CD8-positive, alpha-beta T cell (primary cell): ENCODE measurements at regions of chr6 and their contacts with region 1.

Region 1: DNA sequence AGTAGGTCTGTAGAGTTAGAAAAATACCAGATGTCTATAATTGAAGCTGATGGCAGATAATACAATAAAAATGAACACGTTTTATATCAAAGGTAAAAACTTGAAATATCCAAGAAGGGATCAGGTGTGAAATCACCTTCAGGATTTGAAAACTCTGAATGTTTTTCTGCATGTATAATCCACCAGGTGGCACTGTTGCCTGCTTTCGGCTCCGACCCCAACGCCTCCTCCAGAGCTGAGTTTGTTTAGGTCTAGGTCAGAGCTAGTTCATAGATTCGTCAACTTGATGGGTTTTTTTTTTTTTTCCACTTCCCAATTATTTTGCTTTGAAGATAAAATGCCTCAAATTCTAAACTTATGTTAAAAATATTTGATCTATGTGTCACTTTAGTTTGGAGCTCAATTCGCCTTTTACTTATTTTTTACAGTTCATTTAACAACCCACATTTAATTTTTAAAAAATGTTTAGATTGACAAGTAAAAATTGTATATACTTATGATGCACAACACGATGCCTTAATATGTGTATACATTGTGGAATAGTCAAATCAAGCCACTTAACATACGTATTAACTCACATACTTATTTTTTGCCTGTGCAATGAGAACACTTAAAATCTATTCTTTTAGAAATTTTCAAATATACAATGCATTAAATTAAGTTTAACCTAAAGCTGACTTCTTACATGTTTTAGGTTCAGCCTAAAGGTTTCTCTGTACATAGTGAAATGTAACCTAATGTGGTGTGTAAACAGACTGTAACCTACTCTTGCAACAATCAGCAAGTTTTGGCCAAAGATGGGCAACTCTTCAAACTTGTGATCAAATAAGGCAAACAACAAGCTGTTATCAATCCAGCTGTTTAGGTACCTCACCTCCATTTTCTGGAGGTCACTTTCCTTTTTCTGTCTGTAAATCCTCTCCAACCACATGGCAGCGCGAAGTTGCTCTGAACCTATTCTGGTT is 39.4 kb upstream of the ENPP4 start:
- DNase-seq: peak; percentile 6 to 73 (median 62)
- ATAC-seq: no peak
- H3K4me3 ChIP-seq: no peak overlapping the region
- H3K4me3 Mint-ChIP-seq: no peak overlapping the region
- H3K27ac ChIP-seq: no peak overlapping the region
- H3K27ac Mint-ChIP-seq: no peak overlapping the region
- H3K4me1 ChIP-seq: no peaks in the 10 kb centered on the region
- H3K4me1 Mint-ChIP-seq: no peaks in the 10 kb centered on the region
- H3K27me3 ChIP-seq: no peaks in the 10 kb centered on the region
- H3K27me3 Mint-ChIP-seq: peaks cover 36% of the 10 kb centered on the region
- CTCF ChIP-seq: peak; percentile 95

Region 2: GRCh38 chr6:46104209-46104608 is 13.8 kb after region 1 on chr6:
- CTCF ChIA-PET with region 1: interaction called, 12 read pairs
- POLR2A ChIA-PET with region 1: no interaction called
- intact Hi-C with region 1: no loop called
- DNase-seq: peak in 2 of 9 experiments; percentile 8 to 12
- ATAC-seq: no peak
- H3K4me3 ChIP-seq: no peak overlapping the region
- H3K4me3 Mint-ChIP-seq: no peak overlapping the region
- H3K27ac ChIP-seq: peak overlapping the region in 1 of 2 experiments; percentile 17
- H3K27ac Mint-ChIP-seq: no peak overlapping the region
- H3K4me1 ChIP-seq: peaks cover 7% of the 10 kb centered on the region
- H3K4me1 Mint-ChIP-seq: peaks cover 11% of the 10 kb centered on the region
- H3K27me3 ChIP-seq: no peaks in the 10 kb centered on the region
- H3K27me3 Mint-ChIP-seq: no peaks in the 10 kb centered on the region
- CTCF ChIP-seq: no peak

Region 3: DNA sequence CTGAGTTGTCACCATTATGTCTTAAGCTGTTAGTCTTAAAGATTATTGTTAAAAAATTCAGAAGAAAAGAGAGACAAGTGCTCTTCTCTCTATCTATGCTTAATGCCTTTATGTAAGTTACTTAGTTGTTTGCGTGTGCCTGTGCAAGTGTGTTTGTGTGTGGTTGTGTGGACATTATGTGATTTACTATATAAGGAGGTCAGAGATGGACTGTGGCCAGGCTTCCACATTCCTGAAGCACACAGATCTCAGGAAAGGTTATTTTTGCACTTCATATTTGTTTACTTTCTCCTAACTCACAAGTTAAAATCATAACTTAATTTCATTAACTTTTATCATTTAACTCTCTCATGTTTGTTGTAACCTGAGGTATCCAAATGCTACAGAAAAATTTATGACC is 53.9 kb after region 1 on chr6:
- CTCF ChIA-PET with region 1: no interaction called
- POLR2A ChIA-PET with region 1: no interaction called
- intact Hi-C with region 1: no loop called
- DNase-seq: no peak
- ATAC-seq: no peak
- H3K4me3 ChIP-seq: no peak overlapping the region
- H3K4me3 Mint-ChIP-seq: no peak overlapping the region
- H3K27ac ChIP-seq: no peak overlapping the region
- H3K27ac Mint-ChIP-seq: no peak overlapping the region
- H3K4me1 ChIP-seq: no peaks in the 10 kb centered on the region
- H3K4me1 Mint-ChIP-seq: peaks cover 6% of the 10 kb centered on the region
- H3K27me3 ChIP-seq: no peaks in the 10 kb centered on the region
- H3K27me3 Mint-ChIP-seq: no peaks in the 10 kb centered on the region
- CTCF ChIP-seq: no peak

Region 4: GRCh38 chr6:46400898-46401297 is 310.5 kb after region 1 on chr6:
- CTCF ChIA-PET with region 1: interaction called, 13 read pairs
- POLR2A ChIA-PET with region 1: no interaction called
- intact Hi-C with region 1: no loop called
- DNase-seq: no peak
- ATAC-seq: no peak
- H3K4me3 ChIP-seq: no peak overlapping the region
- H3K4me3 Mint-ChIP-seq: no peak overlapping the region
- H3K27ac ChIP-seq: no peak overlapping the region
- H3K27ac Mint-ChIP-seq: no peak overlapping the region
- H3K4me1 ChIP-seq: no peaks in the 10 kb centered on the region
- H3K4me1 Mint-ChIP-seq: no peaks in the 10 kb centered on the region
- H3K27me3 ChIP-seq: no peaks in the 10 kb centered on the region
- H3K27me3 Mint-ChIP-seq: peaks cover 11% of the 10 kb centered on the region
- CTCF ChIP-seq: no peak

Region 5: DNA sequence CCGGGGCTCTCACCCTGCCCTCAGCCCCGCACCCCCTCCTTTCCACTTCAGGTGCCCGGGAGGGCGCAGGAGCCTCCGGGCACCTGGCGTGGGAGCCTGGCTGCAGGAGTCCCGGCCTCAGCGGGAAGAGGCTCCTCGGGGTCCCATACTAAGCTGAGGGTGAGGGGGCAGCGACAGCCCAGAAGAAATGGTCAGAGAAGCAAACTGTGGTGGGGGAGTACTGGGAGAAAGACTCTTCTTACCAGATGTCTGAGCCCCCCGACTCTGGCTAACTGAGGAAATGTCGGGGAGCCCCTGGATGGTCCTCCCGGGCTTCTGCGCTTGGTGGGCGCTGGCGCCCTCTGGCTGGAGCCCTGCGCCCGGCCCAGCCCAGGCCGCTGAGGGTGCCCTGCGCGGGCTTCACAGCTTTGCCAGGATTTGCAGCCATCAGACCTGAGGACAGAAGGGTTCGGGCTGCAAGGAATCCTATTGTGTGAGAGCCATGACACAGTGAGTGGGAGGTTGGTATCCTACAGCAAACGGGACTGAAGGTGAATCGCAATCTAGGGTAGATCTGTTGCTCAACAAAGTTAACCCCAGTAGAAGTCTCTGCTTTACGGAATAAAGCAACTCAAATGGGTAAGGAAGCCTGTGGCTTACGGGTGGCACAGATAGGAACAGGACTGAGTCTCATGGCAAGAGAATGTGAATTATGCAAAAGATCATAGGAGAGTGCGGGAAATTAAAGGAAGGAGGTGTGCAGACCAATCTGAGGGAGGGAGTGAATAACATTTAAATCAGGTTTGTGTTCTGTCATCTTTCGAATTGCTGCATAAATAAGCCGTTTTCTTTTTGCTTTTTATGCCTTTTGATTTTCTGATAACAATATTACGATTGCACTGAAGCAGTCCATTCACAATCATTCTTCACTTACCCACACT is 401.5 kb after region 1 on chr6:
- CTCF ChIA-PET with region 1: no interaction called
- POLR2A ChIA-PET with region 1: no interaction called
- intact Hi-C with region 1: loop called in 1 of 2 experiments (anchors 5 kb)
- DNase-seq: peak in 5 of 9 experiments; percentile 4 to 53 (median 16)
- ATAC-seq: no peak
- H3K4me3 ChIP-seq: peak overlapping the region; percentile 48 to 52
- H3K4me3 Mint-ChIP-seq: peak overlapping the region; percentile 70
- H3K27ac ChIP-seq: no peak overlapping the region
- H3K27ac Mint-ChIP-seq: no peak overlapping the region
- H3K4me1 ChIP-seq: peaks cover 4% of the 10 kb centered on the region
- H3K4me1 Mint-ChIP-seq: peaks cover 11% of the 10 kb centered on the region
- H3K27me3 ChIP-seq: peaks cover 11 to 25% of the 10 kb centered on the region in 2 experiments
- H3K27me3 Mint-ChIP-seq: peaks cover 75% of the 10 kb centered on the region
- CTCF ChIP-seq: no peak

Region 6: DNA sequence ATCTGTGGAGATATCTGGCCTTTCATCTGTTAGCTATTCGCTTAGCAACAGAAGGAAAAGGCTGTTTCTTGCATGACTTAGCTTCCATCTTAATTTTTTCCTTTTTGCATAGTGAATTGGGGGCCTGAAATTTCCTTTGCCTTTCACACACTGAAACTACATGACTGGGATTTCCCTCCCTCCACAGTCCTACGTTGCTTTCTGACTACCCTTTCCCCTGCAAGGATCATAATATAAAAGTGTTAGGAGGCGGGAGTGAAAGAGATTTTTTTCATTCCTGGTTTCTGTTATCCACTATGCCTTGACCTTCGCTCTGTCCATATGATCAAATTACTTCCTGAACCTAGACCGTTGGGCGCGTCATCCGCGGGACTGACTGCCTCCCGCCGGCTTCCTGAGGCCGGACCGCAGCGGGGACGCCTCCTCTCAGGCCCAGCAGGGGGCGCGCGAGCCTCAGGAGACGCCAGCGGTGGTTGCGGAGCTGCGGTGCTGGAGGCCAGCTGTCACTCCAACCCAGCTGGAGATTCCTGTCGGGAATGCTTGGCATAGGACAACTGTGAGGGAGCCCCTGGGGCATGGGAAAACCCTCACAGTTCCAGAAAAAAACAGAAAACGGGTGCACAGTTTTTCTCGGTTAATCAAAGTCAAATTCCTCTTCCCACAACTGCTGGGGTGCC is 758.4 kb after region 1 on chr6:
- CTCF ChIA-PET with region 1: interaction called, 3 read pairs
- POLR2A ChIA-PET with region 1: no interaction called
- intact Hi-C with region 1: loop called in 1 of 2 experiments (anchors 5 kb)
- DNase-seq: peak in 8 of 9 experiments; percentile 22 to 70 (median 56)
- ATAC-seq: no peak
- H3K4me3 ChIP-seq: no peak overlapping the region
- H3K4me3 Mint-ChIP-seq: peak overlapping the region; percentile 56
- H3K27ac ChIP-seq: no peak overlapping the region
- H3K27ac Mint-ChIP-seq: no peak overlapping the region
- H3K4me1 ChIP-seq: no peaks in the 10 kb centered on the region
- H3K4me1 Mint-ChIP-seq: peaks cover 4% of the 10 kb centered on the region
- H3K27me3 ChIP-seq: peaks cover 0 to 2% of the 10 kb centered on the region in 2 experiments
- H3K27me3 Mint-ChIP-seq: peaks cover 22% of the 10 kb centered on the region
- CTCF ChIP-seq: peak; percentile 67

Region 7: DNA sequence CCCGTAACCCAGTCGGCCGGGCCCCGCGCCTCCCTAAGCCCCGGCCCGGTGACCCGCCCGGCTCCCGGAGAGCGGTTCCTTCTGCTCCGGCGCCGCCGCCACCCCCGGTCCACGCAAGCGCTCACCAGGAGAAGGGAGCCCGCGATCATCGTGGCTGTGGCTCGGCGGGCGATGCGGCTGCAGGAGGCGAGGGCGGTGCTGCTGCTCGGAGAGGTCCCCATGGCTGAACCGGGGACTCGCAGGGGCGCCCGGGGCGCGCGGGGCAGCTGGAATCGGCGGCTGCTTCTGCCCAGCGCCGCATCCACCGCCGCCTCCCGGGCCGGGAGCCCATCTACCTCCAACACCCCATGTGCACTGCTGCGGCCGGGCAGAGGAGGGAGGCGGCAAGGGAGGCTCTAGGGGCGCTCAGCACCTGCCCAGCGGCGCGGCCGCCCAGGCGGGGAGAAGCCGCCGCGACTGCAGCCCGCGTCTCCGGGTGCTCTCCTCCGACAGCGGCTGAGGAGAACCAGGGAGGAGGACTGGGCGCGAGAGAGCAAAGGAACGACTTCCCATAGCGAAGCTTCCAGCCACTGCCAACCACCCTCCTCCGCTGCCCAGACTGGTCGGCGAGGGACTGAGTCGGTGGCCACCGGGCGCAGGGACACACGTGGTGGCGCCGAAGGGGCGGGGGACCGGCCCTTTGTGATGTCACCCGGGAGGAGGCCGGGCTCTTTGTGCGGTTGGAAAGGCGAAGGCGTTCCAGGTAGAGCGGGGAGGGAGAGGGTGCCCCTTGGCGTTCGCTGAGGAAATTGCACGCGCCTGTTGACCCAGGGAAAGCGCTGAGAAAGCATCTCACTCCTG is 1219.1 kb after region 1 on chr6 and contains the start of gene TNFRSF21:
- CTCF ChIA-PET with region 1: no interaction called
- POLR2A ChIA-PET with region 1: no interaction called
- intact Hi-C with region 1: loop called in 1 of 2 experiments (anchors 5 kb)
- DNase-seq: peak; percentile 36 to 81 (median 70)
- ATAC-seq: peak; percentile 92
- H3K4me3 ChIP-seq: peak within 1 kb of the TSS; percentile 48 to 76
- H3K4me3 Mint-ChIP-seq: peak within 1 kb of the TSS; percentile 80
- H3K27ac ChIP-seq: no peak within 1 kb of the TSS
- H3K27ac Mint-ChIP-seq: no peak within 1 kb of the TSS
- H3K4me1 ChIP-seq: peaks cover 6% of the 10 kb centered on the region
- H3K4me1 Mint-ChIP-seq: peaks cover 10% of the 10 kb centered on the region
- H3K27me3 ChIP-seq: peaks cover 7 to 10% of the 10 kb centered on the region in 2 experiments
- H3K27me3 Mint-ChIP-seq: peaks cover 44% of the 10 kb centered on the region
- CTCF ChIP-seq: peak; percentile 64
- total RNA-seq, gene TNFRSF21: 0.42 to 0.52 TPM